Endothelial cell of umbilical vein (primary cell): ENCODE measurements at regions of chr16 and their contacts with region 1.

Region 1: GRCh38 chr16:72501739-72502593 is 330.0 kb upstream of the PMFBP1 start:
- DNase-seq: peak; percentile 88
- H3K4me3 ChIP-seq: no peak overlapping the region
- H3K27ac ChIP-seq: no peak overlapping the region
- H3K4me1 ChIP-seq: no peaks in the 10 kb centered on the region
- H3K27me3 ChIP-seq: no peaks in the 10 kb centered on the region
- CTCF ChIP-seq: peak; percentile 68 to 75
- POLR2A ChIP-seq: no peak

Region 2: DNA sequence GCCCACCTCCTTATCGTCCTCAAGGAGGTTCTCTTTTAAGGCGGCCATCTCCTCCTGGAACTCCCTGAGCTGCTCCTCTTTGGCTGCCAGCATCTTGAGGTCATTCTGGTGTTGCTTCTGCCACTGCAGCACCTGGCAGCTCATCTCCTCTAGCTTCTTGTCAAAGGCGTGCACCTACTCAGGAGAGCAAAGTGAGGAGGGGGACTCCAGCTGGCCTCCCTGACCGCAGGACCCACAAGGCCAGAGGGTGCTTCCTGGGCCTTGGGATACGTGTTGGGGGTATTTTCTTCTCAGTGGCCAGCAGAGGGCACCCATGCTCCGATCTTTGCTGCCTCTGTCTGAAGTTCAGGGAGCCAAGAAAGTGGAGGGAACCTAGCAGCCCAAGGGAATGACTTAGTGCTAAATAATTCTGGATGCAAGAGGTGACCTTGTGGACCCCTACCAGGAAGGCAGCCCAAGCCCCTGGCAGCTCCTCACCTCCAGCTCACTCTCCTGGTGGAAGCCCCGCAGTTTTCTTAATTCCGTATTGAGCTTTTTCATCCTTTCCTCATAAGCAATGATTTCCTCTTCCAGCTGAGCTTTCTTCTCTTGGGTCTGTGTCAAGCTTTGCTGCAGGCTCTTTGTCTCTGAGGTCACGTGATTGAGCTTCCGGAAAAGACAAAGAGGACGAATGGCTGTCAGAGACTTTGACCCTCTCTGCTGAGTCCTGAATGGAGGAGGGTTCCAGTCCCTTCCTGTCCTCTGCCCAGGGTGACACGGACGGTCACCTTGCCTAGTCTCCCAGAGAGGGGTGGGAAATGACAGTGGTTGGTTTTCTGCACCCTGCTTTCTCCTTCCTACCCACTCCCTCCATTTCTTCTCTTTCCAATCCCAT is 377.0 kb before region 1 on chr16:
- CTCF ChIA-PET with region 1: interaction called, 3 read pairs
- POLR2A ChIA-PET with region 1: no interaction called
- dilution Hi-C with region 1: no loop called
- intact Hi-C with region 1: loop called (anchors 1 kb)
- DNase-seq: peak; percentile 67
- H3K4me3 ChIP-seq: no peak overlapping the region
- H3K27ac ChIP-seq: no peak overlapping the region
- H3K4me1 ChIP-seq: peaks cover 3% of the 10 kb centered on the region
- H3K27me3 ChIP-seq: no peaks in the 10 kb centered on the region
- CTCF ChIP-seq: peak; percentile 76 to 82
- POLR2A ChIP-seq: no peak

Region 3: GRCh38 chr16:72727565-72727964 is 225.6 kb after region 1 on chr16:
- CTCF ChIA-PET with region 1: no interaction called
- POLR2A ChIA-PET with region 1: no interaction called
- dilution Hi-C with region 1: no loop called
- intact Hi-C with region 1: loop called (anchors 5 kb)
- DNase-seq: no peak
- H3K4me3 ChIP-seq: no peak overlapping the region
- H3K27ac ChIP-seq: no peak overlapping the region
- H3K4me1 ChIP-seq: no peaks in the 10 kb centered on the region
- H3K27me3 ChIP-seq: no peaks in the 10 kb centered on the region
- CTCF ChIP-seq: no peak
- POLR2A ChIP-seq: no peak

Region 4: DNA sequence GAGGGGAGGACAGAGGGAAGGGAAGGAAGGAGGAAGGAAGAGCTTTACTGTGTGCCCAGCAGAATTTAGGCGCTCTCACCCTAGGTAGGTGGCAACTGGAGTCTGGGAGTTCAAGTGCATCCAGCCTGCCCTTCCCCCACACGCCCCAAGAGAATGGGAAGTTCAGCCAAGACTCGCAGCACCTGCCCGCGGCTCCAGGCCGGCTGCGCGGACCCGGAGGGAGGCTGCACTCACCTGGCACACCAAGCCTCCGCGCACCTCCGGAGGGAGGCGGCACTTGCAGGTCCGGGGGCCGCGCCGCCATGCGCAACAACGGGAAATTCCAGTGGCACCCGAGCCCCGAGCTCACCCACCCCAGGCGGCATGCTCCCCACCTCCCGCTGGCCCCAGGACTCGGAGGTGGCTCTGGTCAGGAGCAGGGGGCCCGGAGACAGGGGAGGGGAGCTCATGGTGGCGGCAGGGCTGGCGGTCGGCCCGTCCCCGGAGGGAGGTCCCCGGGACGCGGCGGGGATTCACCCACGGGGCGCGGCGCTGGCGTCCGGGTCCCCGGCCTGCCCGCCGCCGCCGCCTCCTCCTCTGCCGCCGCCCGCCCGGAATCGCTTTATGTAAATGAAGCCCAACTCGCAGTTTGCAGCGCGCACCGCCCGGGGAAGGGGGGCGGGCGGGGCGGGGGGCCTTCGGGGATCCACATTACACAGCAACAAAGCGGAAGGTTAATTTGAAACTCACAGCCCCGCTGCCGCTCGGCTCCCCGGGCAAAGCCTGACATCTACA is 545.7 kb after region 1 on chr16 and contains the start of gene ZFHX3:
- CTCF ChIA-PET with region 1: no interaction called
- POLR2A ChIA-PET with region 1: no interaction called
- dilution Hi-C with region 1: no loop called
- intact Hi-C with region 1: loop called (anchors 1 kb)
- DNase-seq: peak; percentile 53
- H3K4me3 ChIP-seq: peak within 1 kb of the TSS; percentile 57 to 74 (median 70)
- H3K27ac ChIP-seq: peak within 1 kb of the TSS; percentile 54
- H3K4me1 ChIP-seq: peaks cover 25% of the 10 kb centered on the region
- H3K27me3 ChIP-seq: no peaks in the 10 kb centered on the region
- CTCF ChIP-seq: no peak
- POLR2A ChIP-seq: no peak
- total RNA-seq, gene ZFHX3: 17.7 and 18.8 TPM in 2 replicates

Region 5: DNA sequence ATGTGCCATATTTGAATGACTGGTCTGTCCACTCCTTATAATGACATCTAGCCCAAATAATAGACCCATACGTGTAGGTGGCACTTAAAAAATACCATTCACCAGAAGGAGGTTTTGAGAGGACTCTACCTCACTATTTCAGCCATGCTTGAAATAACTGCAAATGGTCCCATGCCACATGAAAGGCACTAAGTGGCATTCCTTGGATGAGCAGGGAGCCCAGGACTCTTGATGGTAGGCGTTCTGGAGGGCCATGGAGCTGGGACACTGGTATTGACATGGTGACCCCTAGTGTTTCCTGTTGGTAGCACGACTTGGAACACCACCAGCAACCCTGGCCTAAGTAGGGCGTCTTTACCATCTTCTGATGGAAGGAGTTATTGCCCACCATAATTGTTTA is 694.7 kb after region 1 on chr16:
- CTCF ChIA-PET with region 1: interaction called, 5 read pairs
- POLR2A ChIA-PET with region 1: no interaction called
- dilution Hi-C with region 1: no loop called
- intact Hi-C with region 1: loop called (anchors 1 kb)
- DNase-seq: peak; percentile 78
- H3K4me3 ChIP-seq: no peak overlapping the region
- H3K27ac ChIP-seq: no peak overlapping the region
- H3K4me1 ChIP-seq: no peaks in the 10 kb centered on the region
- H3K27me3 ChIP-seq: peaks cover 5 to 10% of the 10 kb centered on the region in 2 experiments
- CTCF ChIP-seq: peak; percentile 56 to 60
- POLR2A ChIP-seq: no peak

Region 6: GRCh38 chr16:74107795-74108618 is 1606.0 kb after region 1 on chr16:
- CTCF ChIA-PET with region 1: no interaction called
- POLR2A ChIA-PET with region 1: no interaction called
- dilution Hi-C with region 1: no loop called
- intact Hi-C with region 1: loop called (anchors 5 kb)
- DNase-seq: peak; percentile 25
- H3K4me3 ChIP-seq: no peak overlapping the region
- H3K27ac ChIP-seq: no peak overlapping the region
- H3K4me1 ChIP-seq: no peaks in the 10 kb centered on the region
- H3K27me3 ChIP-seq: no peaks in the 10 kb centered on the region
- CTCF ChIP-seq: peak; percentile 39 to 49
- POLR2A ChIP-seq: no peak